ENCODE measurements at regions of chr1 and their contacts with region 1.

Region 1: GRCh38 chr1:54488779-54489626 is 59.0 kb upstream of the ACOT11 start:
- DNase-seq: no peak
- H3K4me3 ChIP-seq: peak overlapping the region; percentile 66 to 67
- H3K27ac ChIP-seq: peak overlapping the region; percentile 90
- H3K4me1 ChIP-seq: peaks cover 41% of the 10 kb centered on the region
- H3K27me3 ChIP-seq: no peaks in the 10 kb centered on the region
- CTCF ChIP-seq: peak; percentile 83 to 99 (median 97)
- POLR2A ChIP-seq: no peak

Region 2: DNA sequence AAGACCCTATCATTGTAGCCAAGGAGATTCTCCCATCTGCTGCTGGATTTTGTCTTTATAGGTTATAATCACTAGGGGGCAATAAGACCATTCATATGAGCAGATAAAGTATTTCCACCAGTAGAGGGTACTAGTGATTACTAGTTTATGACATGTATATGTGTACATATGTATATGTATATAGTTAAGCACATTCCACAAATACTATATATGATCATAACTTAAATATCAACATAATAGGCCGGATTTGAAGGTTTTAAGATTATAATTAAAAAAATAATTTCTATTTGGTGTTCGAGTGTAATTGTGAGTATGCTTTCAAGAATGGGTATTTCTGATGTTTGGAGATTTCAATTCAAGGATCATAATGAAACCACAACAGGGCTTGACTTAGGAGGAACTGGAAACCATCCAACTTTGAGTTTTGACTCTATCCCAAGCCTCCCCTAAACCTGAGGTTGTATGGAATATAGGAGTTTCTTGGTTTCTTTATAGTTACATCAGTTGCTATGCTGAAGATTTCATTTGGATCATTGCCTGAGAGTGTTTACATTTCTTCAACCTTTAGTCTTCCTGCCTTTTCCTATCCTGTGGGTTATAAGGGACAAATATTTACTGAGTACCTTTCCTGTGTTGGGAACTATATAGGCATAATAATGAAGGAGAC is 418.7 kb before region 1 on chr1:
- intact Hi-C with region 1: loop called (anchors 5 kb)
- DNase-seq: no peak
- H3K4me3 ChIP-seq: no peak overlapping the region
- H3K27ac ChIP-seq: no peak overlapping the region
- H3K4me1 ChIP-seq: no peaks in the 10 kb centered on the region
- H3K27me3 ChIP-seq: no peaks in the 10 kb centered on the region
- CTCF ChIP-seq: peak; percentile 53 to 74 (median 56)
- POLR2A ChIP-seq: no peak

Region 3: GRCh38 chr1:54218883-54219687 is 269.9 kb before region 1 on chr1:
- intact Hi-C with region 1: loop called (anchors 10 kb)
- DNase-seq: no peak
- H3K4me3 ChIP-seq: no peak overlapping the region
- H3K27ac ChIP-seq: peak overlapping the region; percentile 34
- H3K4me1 ChIP-seq: peaks cover 26% of the 10 kb centered on the region
- H3K27me3 ChIP-seq: no peaks in the 10 kb centered on the region
- CTCF ChIP-seq: no peak
- POLR2A ChIP-seq: no peak

Region 4: GRCh38 chr1:54273092-54273794 is 215.8 kb before region 1 on chr1:
- intact Hi-C with region 1: loop called (anchors 2 kb)
- DNase-seq: peak in 1 of 2 donors; percentile 97
- H3K4me3 ChIP-seq: peak overlapping the region; percentile 10 to 19
- H3K27ac ChIP-seq: peak overlapping the region; percentile 97
- H3K4me1 ChIP-seq: peaks cover 84% of the 10 kb centered on the region
- H3K27me3 ChIP-seq: no peaks in the 10 kb centered on the region
- CTCF ChIP-seq: peak in 2 of 3 experiments; percentile 62 to 70
- POLR2A ChIP-seq: no peak

Region 5: GRCh38 chr1:54406339-54407153 is 82.5 kb before region 1 on chr1 and contains the start of gene SSBP3:
- intact Hi-C with region 1: loop called (anchors 1 kb)
- DNase-seq: no peak
- H3K4me3 ChIP-seq: peak within 1 kb of the TSS; percentile 79 to 98
- H3K27ac ChIP-seq: peak within 1 kb of the TSS; percentile 97
- H3K4me1 ChIP-seq: peaks cover 66% of the 10 kb centered on the region
- H3K27me3 ChIP-seq: no peaks in the 10 kb centered on the region
- CTCF ChIP-seq: peak in 1 of 3 experiments; percentile 27
- POLR2A ChIP-seq: peak in 1 of 2 donors; percentile 90
- total RNA-seq, gene SSBP3: 70.7 TPM

Region 6: DNA sequence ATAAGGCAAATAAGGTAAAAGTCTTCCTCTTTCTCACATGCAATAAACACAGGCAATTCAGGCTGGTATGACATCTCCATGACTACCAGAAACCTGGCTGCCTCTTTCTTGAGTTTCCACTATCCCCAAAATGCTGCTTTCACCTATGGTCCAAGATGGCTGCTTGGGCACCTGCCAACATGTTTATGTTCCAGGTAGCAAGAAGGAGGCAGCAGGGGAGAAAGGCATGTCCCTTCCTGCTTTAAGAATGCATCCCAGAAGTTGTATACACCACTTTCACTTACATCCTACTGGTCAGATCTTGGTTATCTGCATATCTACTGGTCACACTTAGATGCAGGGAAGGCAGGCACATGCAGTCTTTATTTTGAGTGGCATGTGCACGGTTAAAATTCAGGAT is 39.6 kb after region 1 on chr1:
- intact Hi-C with region 1: no loop called
- DNase-seq: no peak
- H3K4me3 ChIP-seq: no peak overlapping the region
- H3K27ac ChIP-seq: no peak overlapping the region
- H3K4me1 ChIP-seq: no peaks in the 10 kb centered on the region
- H3K27me3 ChIP-seq: no peaks in the 10 kb centered on the region
- CTCF ChIP-seq: no peak
- POLR2A ChIP-seq: no peak

Measured in vagina (tissue), 2 donors.